ENCODE measurements at regions of chr3 and their contacts with region 1.

Region 1: GRCh38 chr3:30502742-30503073 is 103.7 kb upstream of the TGFBR2 start:
- DNase-seq: no peak
- ATAC-seq: peak; percentile 66
- H3K4me3 Mint-ChIP-seq: peak overlapping the region; percentile 74
- H3K27ac Mint-ChIP-seq: peak overlapping the region; percentile 95
- H3K4me1 Mint-ChIP-seq: peaks cover 64% of the 10 kb centered on the region
- H3K27me3 Mint-ChIP-seq: no peaks in the 10 kb centered on the region
- CTCF ChIP-seq: no peak

Region 2: DNA sequence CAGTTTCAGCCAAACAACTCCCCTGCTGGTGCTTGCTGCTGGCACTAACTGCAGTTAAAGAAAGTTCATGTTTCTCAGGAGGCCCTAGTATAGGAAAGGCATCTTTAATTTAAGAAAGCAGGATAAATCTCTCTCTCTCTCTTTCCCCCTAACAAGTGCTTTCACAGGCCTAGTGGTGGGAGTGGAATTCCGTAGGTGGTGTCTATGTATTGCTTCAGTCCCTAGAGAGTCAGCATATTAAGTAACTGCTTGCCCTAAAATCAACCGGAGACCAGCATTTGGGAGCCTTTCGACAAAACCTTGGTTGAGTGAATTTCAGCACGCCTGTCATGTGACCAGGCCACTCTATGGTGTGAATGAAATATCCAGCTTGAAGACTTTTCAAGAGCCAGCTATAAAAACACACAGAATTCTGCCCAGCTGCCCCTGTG is 65.5 kb before region 1 on chr3:
- CTCF ChIA-PET with region 1: no interaction called
- POLR2A ChIA-PET with region 1: no interaction called
- intact Hi-C with region 1: loop called (anchors 2 kb)
- DNase-seq: no peak
- ATAC-seq: no peak
- H3K4me3 Mint-ChIP-seq: no peak overlapping the region
- H3K27ac Mint-ChIP-seq: no peak overlapping the region
- H3K4me1 Mint-ChIP-seq: peaks cover 43% of the 10 kb centered on the region
- H3K27me3 Mint-ChIP-seq: no peaks in the 10 kb centered on the region
- CTCF ChIP-seq: no peak

Region 3: GRCh38 chr3:30553641-30554316 is 51.1 kb after region 1 on chr3:
- CTCF ChIA-PET with region 1: no interaction called
- POLR2A ChIA-PET with region 1: no interaction called
- intact Hi-C with region 1: loop called (anchors 5 kb)
- DNase-seq: no peak
- ATAC-seq: no peak
- H3K4me3 Mint-ChIP-seq: no peak overlapping the region
- H3K27ac Mint-ChIP-seq: no peak overlapping the region
- H3K4me1 Mint-ChIP-seq: peaks cover 39% of the 10 kb centered on the region
- H3K27me3 Mint-ChIP-seq: no peaks in the 10 kb centered on the region
- CTCF ChIP-seq: no peak

Region 4: DNA sequence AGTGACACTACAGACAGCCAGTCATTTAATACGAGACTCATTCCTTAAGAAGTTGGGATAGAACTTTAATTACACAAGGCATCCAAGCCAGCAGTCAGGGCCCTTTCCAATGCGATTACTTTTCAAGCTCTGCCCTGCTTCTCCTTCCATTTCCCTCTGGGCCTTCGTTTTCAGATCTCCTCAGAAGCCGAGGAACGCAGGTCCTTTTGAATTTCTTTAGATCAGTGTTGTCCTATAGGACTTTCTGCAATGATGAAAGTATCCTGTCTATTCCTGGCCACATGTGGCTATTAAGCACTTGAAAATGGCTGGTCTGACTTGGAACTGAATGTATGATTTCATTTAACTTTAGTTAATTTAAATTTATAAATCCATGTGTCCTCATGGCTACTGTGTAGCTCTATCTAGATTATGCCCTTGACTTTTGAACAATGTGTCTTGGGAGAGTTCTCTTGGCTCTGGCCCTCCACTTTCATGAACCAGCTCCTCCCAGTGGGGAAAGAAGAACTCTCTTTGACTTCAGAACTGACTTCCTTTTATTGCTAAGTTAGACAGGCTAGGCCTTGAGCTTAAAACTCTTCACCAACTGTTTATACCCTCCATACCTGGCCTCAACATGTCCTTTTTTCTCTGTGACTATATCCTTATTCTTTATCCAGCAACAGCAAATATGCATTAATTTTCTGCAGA is 126.3 kb after region 1 on chr3:
- CTCF ChIA-PET with region 1: interaction called, 5 read pairs
- POLR2A ChIA-PET with region 1: no interaction called
- intact Hi-C with region 1: loop called (anchors 1 kb)
- DNase-seq: no peak
- ATAC-seq: peak; percentile 52
- H3K4me3 Mint-ChIP-seq: peak overlapping the region; percentile 49
- H3K27ac Mint-ChIP-seq: peak overlapping the region; percentile 91
- H3K4me1 Mint-ChIP-seq: peaks cover 94% of the 10 kb centered on the region
- H3K27me3 Mint-ChIP-seq: no peaks in the 10 kb centered on the region
- CTCF ChIP-seq: no peak

Region 5: GRCh38 chr3:30658328-30659052 is 155.8 kb after region 1 on chr3:
- CTCF ChIA-PET with region 1: no interaction called
- POLR2A ChIA-PET with region 1: interaction called, 5 read pairs
- intact Hi-C with region 1: loop called (anchors 5 kb)
- DNase-seq: no peak
- ATAC-seq: peak; percentile 87
- H3K4me3 Mint-ChIP-seq: peak overlapping the region; percentile 12
- H3K27ac Mint-ChIP-seq: peak overlapping the region; percentile 82
- H3K4me1 Mint-ChIP-seq: peaks cover 94% of the 10 kb centered on the region
- H3K27me3 Mint-ChIP-seq: no peaks in the 10 kb centered on the region
- CTCF ChIP-seq: no peak

Region 6: GRCh38 chr3:30702828-30703397 is 200.2 kb after region 1 on chr3:
- CTCF ChIA-PET with region 1: no interaction called
- POLR2A ChIA-PET with region 1: no interaction called
- intact Hi-C with region 1: no loop called
- DNase-seq: no peak
- ATAC-seq: no peak
- H3K4me3 Mint-ChIP-seq: no peak overlapping the region
- H3K27ac Mint-ChIP-seq: no peak overlapping the region
- H3K4me1 Mint-ChIP-seq: peaks cover 8% of the 10 kb centered on the region
- H3K27me3 Mint-ChIP-seq: no peaks in the 10 kb centered on the region
- CTCF ChIP-seq: no peak